ENCODE measurements at regions of chr19 and their contacts with region 1.

Region 1: DNA sequence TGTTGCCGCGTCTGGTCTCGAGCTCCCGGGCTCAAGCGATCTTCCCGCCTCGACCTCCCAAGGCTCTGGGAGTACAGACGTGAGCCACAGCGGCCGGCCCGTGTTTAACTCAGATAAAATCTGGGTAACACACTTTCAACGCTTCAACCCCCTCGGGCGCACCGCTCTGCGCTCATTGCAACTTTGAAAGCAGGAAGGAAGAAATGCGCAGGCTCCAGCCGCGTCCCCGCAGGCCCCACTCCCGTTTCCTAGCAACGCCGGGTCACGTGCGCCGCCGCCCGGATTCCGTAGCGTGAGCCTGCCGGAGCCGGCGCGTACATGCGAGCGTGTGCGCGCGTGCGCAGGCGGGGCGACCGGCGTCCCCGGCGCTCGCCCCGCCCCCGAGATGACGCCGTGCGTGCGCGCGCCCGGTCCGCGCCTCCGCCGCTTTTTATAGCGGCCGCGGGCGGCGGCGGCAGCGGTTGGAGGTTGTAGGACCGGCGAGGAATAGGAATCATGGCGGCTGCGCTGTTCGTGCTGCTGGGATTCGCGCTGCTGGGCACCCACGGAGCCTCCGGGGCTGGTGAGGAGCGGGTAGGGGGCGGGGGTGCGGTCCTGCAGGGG is at the start of gene BSG:
- DNase-seq: peak; percentile 99
- ATAC-seq: peak; percentile 77
- total RNA-seq, gene BSG: 1,651 TPM

Region 2: DNA sequence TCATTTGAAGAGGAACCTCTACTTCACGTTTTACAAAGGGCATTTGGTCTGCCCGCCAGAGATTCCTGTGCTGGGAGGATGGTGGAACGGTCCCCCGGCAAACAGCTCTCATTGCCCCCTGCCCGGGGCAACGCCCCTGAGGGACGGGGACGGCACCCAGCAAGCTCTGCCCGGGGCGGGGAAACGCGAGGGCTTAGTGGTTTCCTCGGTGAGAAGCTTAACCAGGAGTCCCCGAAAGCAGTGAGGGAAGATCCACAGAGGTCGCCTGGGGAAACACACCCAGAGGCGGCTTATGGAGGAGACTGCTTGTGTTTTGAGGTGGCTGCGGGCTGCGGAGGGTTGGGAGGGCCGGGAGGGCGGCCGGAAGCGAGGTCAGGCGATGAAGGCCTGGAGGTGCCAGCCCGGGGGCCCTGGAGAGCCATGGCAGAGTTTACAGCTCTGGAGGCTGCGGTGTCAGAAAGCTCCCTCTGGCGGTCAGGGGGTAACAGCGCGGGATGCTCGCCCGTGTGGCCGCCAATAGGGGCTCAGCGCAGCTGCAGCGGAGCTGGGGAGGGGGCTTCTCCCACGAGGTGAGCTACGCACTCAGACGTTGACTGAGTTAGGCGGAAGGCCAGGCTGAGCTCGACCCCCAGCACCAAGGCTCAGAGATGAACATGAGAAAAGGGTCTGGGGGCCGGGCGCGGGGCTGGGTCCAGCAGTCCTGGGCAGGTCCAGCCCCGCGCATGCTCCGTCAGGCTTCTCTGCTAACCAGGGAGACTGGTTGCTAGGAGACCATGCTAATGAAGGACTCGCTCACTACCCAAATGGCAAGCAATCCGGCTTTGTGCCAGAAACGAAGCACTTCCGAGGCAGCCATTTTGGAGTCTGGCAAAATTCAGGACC is 65.6 kb before region 1 on chr19:
- intact Hi-C with region 1: loop called (anchors 2 kb)
- DNase-seq: peak; percentile 99
- ATAC-seq: peak; percentile 94

Region 3: DNA sequence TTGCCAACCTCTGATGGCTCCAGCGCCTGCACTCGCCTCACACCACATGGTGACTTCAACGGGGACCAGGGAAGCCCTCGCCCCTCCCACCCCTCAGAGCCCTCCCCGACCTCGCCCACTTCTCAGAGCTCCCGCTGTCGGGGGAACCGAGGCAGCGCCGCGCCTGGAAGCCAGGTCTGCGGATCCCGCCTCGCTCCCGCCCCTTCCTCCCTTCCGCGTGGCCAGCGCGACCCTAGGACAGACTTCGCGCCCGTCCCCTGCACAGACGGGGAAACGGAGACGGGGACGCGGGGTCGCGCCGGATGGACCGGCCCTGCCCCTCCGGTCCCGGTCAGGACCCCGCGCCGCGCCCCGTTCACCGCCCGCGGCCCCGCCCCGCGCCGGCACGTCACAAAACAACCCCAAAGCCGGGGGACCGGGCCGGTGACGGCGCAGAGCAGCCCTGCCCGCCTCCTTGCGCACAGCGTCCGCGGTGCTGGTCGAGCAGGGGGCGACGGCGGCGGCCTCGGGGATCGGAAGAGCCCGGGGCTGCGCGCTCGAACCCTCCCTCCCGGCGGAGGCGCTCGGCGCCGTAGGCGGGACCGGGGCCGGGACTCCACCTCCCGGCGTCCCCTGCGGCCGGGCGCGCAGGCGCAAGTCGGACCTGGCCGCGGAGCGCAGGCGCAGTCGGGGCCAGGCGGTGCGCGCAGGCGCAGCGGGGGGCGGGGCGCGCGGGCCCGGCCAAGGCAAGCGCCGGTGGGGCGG is 41.1 kb before region 1 on chr19:
- intact Hi-C with region 1: loop called (anchors 2 kb)
- DNase-seq: peak; percentile 93
- ATAC-seq: peak; percentile 84

Region 4: GRCh38 chr19:633068-633785 is 61.0 kb after region 1 on chr19 and contains the start of gene POLRMT:
- intact Hi-C with region 1: loop called (anchors 5 kb)
- DNase-seq: peak; percentile 98
- ATAC-seq: peak; percentile 98
- total RNA-seq, gene POLRMT: 51.2 TPM

Region 5: GRCh38 chr19:662962-663681 is 90.9 kb after region 1 on chr19 and contains the start of gene RNF126:
- intact Hi-C with region 1: loop called (anchors 5 kb)
- DNase-seq: peak; percentile 96
- ATAC-seq: peak; percentile 91
- total RNA-seq, gene RNF126: 19.7 TPM

Measured in Right ventricle myocardium inferior (tissue), 1 donor.